WTC11 (cell line): ENCODE measurements at regions of chr1 and their contacts with region 1.

Region 1: DNA sequence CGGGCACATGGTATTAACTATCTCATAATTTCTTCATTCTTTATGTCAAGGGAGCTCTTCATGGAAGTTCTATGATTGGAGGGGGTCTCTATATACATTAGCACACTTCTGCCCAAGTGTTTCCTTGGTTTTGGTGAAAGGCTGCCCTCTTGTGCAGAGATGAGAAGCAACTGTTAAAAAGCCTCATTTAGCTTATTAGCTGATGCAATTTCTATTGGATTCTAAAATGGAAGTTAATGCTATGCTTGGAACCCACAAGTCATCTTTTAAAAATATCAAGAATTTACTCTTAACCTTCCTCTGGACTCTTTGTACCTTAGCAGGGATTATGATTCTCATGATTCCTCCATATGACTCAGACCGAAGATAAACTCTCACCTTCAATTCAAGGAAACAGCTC is 328.9 kb downstream of the PTBP2 start:
- DNase-seq: no peak
- ATAC-seq: peak; percentile 93
- H3K4me3 Mint-ChIP-seq: no peak overlapping the region
- H3K27ac Mint-ChIP-seq: no peak overlapping the region
- H3K4me1 Mint-ChIP-seq: peaks cover 5% of the 10 kb centered on the region; the same call in 1 of the 2 replicates
- H3K27me3 Mint-ChIP-seq: no peaks in the 10 kb centered on the region
- CTCF ChIP-seq: no peak

Region 2: DNA sequence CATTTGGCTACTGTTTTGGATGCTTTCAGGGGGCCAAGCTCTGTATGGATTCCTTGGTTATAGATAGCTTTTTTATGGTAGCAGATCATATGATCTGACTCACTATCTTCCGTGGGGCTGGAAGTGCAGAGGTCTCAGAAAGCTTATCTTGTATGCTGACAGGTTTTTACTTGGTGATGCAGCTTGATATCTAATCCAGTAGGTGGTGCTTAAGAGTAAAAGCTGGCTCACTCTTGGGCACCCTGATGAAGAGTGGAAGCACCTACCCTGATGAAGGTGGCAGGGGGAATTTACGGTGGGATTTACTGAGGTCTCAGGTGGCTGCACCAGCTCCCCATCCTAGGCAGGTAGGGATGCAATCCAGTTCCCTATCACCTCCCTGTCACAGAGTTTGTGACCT is 177.7 kb before region 1 on chr1:
- CTCF ChIA-PET with region 1: interaction called, 16 read pairs
- POLR2A ChIA-PET with region 1: no interaction called
- DNase-seq: no peak
- ATAC-seq: peak; percentile 93
- H3K4me3 Mint-ChIP-seq: no peak overlapping the region
- H3K27ac Mint-ChIP-seq: no peak overlapping the region
- H3K4me1 Mint-ChIP-seq: no peaks in the 10 kb centered on the region
- H3K27me3 Mint-ChIP-seq: no peaks in the 10 kb centered on the region
- CTCF ChIP-seq: 0 out of 2 replicates have a peak, but pooled peaks have one; percentile 16

Region 3: DNA sequence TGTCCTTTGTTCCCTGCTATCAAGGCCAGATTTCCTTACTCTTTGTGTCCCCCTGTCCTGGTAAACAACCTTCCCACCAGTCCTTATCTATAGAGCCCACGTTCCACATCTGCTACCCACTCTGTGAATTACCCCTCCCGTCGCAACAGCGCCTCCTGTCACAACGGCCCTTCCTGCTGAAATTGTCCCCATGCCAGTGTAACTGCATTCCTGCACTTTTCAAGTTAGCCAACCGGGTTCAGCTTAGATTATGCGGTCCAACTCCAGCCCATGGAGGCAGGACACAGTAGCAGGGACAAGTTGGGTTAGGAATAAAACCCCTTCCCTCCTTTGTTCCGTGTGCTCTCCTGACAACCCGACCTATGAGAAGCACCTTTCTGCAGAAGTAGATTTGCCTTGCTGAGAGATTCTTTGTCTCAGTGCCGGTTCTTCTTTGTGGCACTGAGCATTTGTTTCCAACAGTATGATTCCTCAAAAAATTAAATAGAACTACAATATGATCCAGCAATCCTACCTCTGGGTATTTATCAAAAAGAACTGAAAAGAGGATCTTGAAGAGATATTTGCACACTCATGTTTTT is 148.6 kb before region 1 on chr1:
- CTCF ChIA-PET with region 1: no interaction called
- POLR2A ChIA-PET with region 1: no interaction called
- DNase-seq: no peak
- ATAC-seq: no peak
- H3K4me3 Mint-ChIP-seq: no peak overlapping the region
- H3K27ac Mint-ChIP-seq: no peak overlapping the region
- H3K4me1 Mint-ChIP-seq: no peaks in the 10 kb centered on the region
- H3K27me3 Mint-ChIP-seq: no peaks in the 10 kb centered on the region; the same call in 1 of the 2 replicates
- CTCF ChIP-seq: no peak

Region 4: GRCh38 chr1:96968541-96968940 is 82.0 kb before region 1 on chr1:
- CTCF ChIA-PET with region 1: interaction called, 11 read pairs
- POLR2A ChIA-PET with region 1: no interaction called
- DNase-seq: no peak
- ATAC-seq: 0 out of 2 replicates have a peak, but pooled peaks have one; percentile 22
- H3K4me3 Mint-ChIP-seq: no peak overlapping the region
- H3K27ac Mint-ChIP-seq: no peak overlapping the region
- H3K4me1 Mint-ChIP-seq: no peaks in the 10 kb centered on the region
- H3K27me3 Mint-ChIP-seq: no peaks in the 10 kb centered on the region
- CTCF ChIP-seq: no peak